Heart right ventricle (tissue), 16 donors: ENCODE measurements at regions of chr11 and their contacts with region 1.

Region 1: DNA sequence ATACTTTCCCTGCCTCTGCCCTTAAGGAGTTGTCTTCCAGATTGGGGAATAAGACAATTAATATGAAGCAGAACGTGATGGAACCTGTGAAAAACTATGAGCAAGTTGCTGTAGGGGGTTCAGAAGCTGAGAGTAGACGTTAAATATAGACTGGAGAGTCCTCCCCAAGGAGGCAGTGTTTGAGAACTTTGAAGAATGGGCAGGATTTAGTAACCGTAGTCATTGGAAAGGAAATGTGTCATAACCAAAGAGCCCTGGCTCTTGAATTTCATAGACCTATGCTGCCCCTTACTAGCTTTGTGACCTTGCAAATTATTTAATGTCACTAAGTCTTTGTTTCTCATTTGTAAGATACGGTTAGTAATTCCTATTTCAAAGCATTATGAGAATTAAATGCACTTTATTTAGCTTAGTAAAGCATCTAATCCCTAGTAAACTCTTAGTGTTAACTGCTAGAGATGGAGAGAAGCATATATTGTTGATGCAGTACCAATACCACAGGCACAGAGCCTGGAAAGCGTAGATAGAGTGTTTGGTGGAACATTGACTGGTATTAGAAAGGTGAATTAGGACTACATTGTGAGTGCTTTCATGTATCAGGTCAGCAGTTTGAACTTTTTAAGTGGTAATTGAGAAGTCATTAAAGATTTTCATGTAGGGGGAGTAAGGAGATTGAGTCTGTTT is 54.1 kb downstream of the MCAM start:
- DNase-seq: no peak
- ATAC-seq: peak; percentile 41 to 84 (median 70)
- H3K4me3 ChIP-seq: no peak overlapping the region
- H3K27ac ChIP-seq: peak overlapping the region in 9 of 10 donors; percentile 18 to 81 (median 73)
- H3K4me1 ChIP-seq: peaks cover 5 to 94% (median 31%) of the 10 kb centered on the region in 9 donors
- H3K27me3 ChIP-seq: no peaks in the 10 kb centered on the region
- CTCF ChIP-seq: peak in 4 of 9 donors; percentile 20 to 44 (median 27)

Region 2: DNA sequence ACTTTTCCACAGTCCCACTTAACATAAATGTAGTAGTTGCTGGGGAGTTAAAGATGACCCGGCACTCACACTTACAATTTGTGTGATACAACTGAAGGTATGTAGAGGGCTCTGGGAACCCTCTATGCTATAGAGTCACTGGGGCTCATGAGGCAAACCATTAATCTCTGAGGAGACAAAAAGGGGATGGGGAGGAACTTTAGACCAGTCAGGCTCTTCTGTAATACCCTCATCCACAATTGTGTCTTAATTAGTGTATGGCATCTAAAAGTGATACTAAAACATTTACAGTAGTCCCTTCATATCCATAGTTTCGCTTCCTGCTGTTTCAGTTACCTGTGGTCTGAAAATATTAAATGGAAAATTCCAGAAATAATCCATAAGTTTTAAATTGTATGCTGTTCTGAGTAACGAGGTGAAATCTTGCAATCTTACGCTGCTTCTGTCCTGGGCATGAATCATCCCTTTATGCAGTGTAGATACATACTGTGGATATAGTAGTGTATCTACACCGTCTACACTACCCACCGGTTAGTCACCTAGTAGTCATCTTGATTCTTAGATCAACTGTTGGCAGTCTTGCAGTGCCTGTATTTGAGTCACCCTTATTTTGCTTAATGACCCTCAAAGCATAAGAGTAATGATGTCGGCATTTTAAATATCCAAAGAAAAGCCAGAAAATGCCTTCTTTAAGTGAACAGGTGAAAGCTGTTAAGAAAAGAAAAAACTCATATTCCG is 44.5 kb before region 1 on chr11:
- intact Hi-C with region 1: loop called in 1 of 10 experiments (anchors 5 kb)
- DNase-seq: no peak
- ATAC-seq: peak in 1 of 8 donors; percentile 35
- H3K4me3 ChIP-seq: no peak overlapping the region
- H3K27ac ChIP-seq: no peak overlapping the region
- H3K4me1 ChIP-seq: peaks cover 0 to 26% (median 12%) of the 10 kb centered on the region in 9 donors
- H3K27me3 ChIP-seq: no peaks in the 10 kb centered on the region
- CTCF ChIP-seq: no peak

Region 3: GRCh38 chr11:119229288-119229672 is 33.5 kb before region 1 on chr11:
- intact Hi-C with region 1: loop called in 1 of 10 experiments (anchors 5 kb)
- DNase-seq: no peak
- ATAC-seq: no peak
- H3K4me3 ChIP-seq: no peak overlapping the region
- H3K27ac ChIP-seq: no peak overlapping the region
- H3K4me1 ChIP-seq: peaks cover 0 to 15% (median 0%) of the 10 kb centered on the region in 9 donors
- H3K27me3 ChIP-seq: no peaks in the 10 kb centered on the region
- CTCF ChIP-seq: no peak